Dendritic cell treated with granulocyte-macrophage colony-stimulating factor and Interleukin-4, amounts not matched to agents 40 ng/mL and 50 ng/mL, for 4 days (primary cell): ENCODE measurements at regions of chr15 and their contacts with region 1.

Region 1: GRCh38 chr15:65516997-65517865 is at the start of gene DPP8:
- H3K4me3 Mint-ChIP-seq: peak within 1 kb of the TSS; percentile 93
- H3K27ac Mint-ChIP-seq: peak within 1 kb of the TSS; percentile 95
- H3K4me1 Mint-ChIP-seq: peaks cover 21% of the 10 kb centered on the region
- H3K27me3 Mint-ChIP-seq: no peaks in the 10 kb centered on the region

Region 2: GRCh38 chr15:65414841-65415621 is 102.2 kb before region 1 on chr15:
- intact Hi-C with region 1: no loop called
- H3K4me3 Mint-ChIP-seq: no peak overlapping the region
- H3K27ac Mint-ChIP-seq: no peak overlapping the region
- H3K4me1 Mint-ChIP-seq: no peaks in the 10 kb centered on the region
- H3K27me3 Mint-ChIP-seq: peaks cover 38% of the 10 kb centered on the region

Region 3: DNA sequence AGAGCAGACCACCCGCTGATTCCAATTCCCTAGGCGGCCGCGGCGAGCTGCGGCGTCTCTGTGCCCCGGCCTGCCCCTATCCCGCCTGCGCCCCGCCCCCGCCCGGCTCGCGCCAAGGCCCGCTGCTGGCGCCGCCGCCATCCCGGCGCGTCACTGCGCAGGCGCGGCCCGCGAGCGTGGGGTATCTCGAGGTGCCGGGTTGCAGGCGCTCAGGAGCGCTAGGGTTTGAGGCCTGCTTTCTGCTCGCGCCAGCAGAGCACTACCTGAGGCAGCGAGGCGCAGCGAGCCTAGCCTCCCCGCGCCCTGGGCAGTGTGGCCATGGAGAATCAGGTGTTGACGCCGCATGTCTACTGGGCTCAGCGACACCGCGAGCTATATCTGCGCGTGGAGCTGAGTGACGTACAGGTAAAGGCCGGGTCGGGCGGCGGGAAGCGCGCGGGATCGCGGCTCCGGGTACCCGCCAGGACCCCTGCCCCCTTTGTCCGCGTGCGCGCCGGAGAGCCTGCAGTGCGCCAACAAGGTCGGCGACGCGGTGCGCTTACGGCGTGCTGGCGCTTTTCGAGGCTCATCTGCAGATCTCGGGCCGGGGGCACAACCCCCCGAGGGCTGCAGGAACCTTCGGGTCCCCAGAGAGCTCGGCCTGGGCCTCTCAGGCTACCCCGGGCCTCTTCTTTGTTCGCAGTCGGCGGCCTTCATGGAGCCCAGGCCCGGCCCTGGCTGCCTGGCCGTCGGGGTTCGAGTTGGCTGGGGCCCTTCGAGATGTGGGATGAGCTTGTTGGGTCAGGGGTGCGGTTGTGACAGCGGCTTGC is 13.3 kb after region 1 on chr15 and contains the start of gene HACD3:
- intact Hi-C with region 1: loop called (anchors 1 kb)
- H3K4me3 Mint-ChIP-seq: peak within 1 kb of the TSS; percentile 80
- H3K27ac Mint-ChIP-seq: peak within 1 kb of the TSS; percentile 51
- H3K4me1 Mint-ChIP-seq: peaks cover 7% of the 10 kb centered on the region
- H3K27me3 Mint-ChIP-seq: no peaks in the 10 kb centered on the region

Region 4: GRCh38 chr15:65610871-65611718 is 93.9 kb after region 1 on chr15 and contains the start of gene INTS14:
- intact Hi-C with region 1: loop called (anchors 1 kb)
- H3K4me3 Mint-ChIP-seq: peak within 1 kb of the TSS; percentile 96
- H3K27ac Mint-ChIP-seq: peak within 1 kb of the TSS; percentile 97
- H3K4me1 Mint-ChIP-seq: peaks cover 37% of the 10 kb centered on the region
- H3K27me3 Mint-ChIP-seq: no peaks in the 10 kb centered on the region